ENCODE measurements at regions of chr16 and their contacts with region 1.

Region 1: GRCh38 chr16:49441366-49441780 is 67.8 kb downstream of the C16orf78 start:
- DNase-seq: peak; percentile 81
- ATAC-seq: peak; percentile 96
- H3K4me3 Mint-ChIP-seq: peak overlapping the region; percentile 20
- H3K27ac Mint-ChIP-seq: peak overlapping the region; percentile 72
- H3K4me1 Mint-ChIP-seq: peaks cover 20% of the 10 kb centered on the region
- H3K27me3 Mint-ChIP-seq: no peaks in the 10 kb centered on the region

Region 2: DNA sequence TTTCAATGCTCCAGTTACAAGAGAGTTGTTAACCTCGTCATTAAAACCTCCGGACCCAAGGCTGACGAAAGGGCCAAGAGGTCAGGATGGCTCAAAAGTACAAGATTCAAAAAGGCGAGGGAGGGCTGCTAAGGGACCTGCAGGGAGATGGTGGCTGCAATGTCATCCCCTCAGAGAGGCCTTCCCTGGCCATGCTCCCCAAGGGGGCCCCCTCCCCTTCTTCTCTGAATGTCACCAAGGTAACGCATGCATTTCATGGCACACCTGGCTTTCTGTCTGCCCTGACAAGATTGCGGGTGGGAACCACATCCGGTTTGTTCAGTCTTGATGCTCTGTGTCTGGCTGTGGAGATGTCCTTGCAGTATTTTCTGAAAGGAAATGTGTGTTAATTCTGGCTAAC is 22.2 kb after region 1 on chr16:
- CTCF ChIA-PET with region 1: interaction called, 3 read pairs
- POLR2A ChIA-PET with region 1: no interaction called
- intact Hi-C with region 1: loop called in 1 of 2 experiments (anchors 1 kb)
- DNase-seq: peak; percentile 86
- ATAC-seq: peak; percentile 84
- H3K4me3 Mint-ChIP-seq: peak overlapping the region; percentile 46
- H3K27ac Mint-ChIP-seq: peak overlapping the region; percentile 83
- H3K4me1 Mint-ChIP-seq: peaks cover 44% of the 10 kb centered on the region
- H3K27me3 Mint-ChIP-seq: no peaks in the 10 kb centered on the region

Region 3: DNA sequence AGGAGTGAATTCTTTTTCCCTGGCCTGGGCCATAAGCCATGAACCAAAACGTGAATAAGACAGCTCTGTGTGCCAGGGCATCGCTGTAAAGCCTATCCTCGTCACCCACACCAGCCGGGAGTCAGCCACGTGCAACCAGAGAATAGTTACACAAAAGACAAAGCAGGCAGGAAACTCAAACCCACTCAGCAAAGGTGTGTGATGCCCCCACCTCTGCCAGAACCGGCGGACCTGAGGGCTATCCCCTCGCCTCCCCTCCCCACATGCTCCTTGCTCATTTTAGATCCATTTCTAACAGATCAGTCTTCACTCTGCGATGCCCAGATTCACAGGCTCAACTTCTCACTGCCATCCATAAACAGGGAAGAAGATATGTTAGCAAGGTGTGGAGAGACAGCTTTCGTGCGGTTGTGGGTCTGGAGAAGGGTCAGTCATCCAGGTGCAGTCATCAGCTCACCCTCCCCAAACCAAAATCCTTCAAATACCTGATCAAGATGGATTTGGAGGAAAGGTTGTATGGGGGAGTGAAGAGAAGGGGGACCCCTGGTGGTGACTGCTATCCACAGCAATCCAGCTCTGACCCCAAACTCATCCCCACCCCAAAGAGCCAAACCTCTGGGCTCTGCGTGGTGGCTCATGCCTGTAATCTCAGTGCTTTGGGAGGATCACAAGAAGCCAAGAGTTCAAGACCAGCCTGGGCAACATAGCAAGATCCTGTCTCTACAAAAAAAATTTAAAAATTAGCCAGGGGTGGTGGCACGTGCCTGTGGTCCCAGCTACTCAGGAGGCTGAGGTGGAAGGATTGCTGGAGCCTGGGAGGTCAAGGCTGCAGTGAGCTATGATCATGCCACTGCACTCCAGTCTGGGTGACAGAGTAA is 151.4 kb after region 1 on chr16:
- CTCF ChIA-PET with region 1: interaction called, 4 read pairs
- POLR2A ChIA-PET with region 1: no interaction called
- intact Hi-C with region 1: loop called (anchors 1 to 5 kb)
- DNase-seq: peak; percentile 65
- ATAC-seq: peak; percentile 74
- H3K4me3 Mint-ChIP-seq: no peak overlapping the region
- H3K27ac Mint-ChIP-seq: no peak overlapping the region
- H3K4me1 Mint-ChIP-seq: peaks cover 11% of the 10 kb centered on the region
- H3K27me3 Mint-ChIP-seq: peaks cover 3% of the 10 kb centered on the region

Region 4: GRCh38 chr16:49716339-49716934 is 275.1 kb after region 1 on chr16:
- CTCF ChIA-PET with region 1: no interaction called
- POLR2A ChIA-PET with region 1: no interaction called
- intact Hi-C with region 1: no loop called
- DNase-seq: no peak
- ATAC-seq: no peak
- H3K4me3 Mint-ChIP-seq: no peak overlapping the region
- H3K27ac Mint-ChIP-seq: no peak overlapping the region
- H3K4me1 Mint-ChIP-seq: no peaks in the 10 kb centered on the region
- H3K27me3 Mint-ChIP-seq: peaks cover 2% of the 10 kb centered on the region

Region 5: DNA sequence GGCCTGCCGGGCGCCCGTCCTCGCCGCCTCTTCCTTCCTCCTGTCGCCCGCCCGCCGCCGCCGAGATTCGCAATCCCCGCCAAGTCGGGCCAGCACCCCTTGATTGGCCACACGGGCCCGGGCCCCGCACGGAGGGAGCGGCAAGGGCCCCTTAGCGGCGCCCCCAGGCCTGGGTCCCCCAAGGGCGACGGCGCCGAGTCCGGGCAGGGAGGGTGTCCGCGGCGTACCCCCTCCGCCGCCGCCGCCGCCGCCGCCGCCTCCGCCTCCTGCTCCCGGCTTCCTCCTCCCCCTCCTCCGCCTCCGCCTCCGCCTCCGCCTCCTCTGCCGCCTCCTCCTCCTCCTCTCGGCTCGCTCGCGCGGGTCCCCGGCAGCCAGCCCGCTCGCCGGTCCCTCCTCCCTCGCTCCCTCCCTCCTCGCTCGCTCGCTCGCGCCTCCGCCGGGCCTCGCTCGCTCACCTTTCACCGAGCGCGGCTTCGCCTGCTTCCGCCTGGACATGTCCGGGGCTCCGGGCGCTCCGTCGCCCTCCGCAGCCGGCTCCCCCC is 414.0 kb after region 1 on chr16:
- CTCF ChIA-PET with region 1: no interaction called
- POLR2A ChIA-PET with region 1: no interaction called
- intact Hi-C with region 1: loop called in 1 of 2 experiments (anchors 5 kb)
- DNase-seq: peak; percentile 65
- ATAC-seq: peak; percentile 43
- H3K4me3 Mint-ChIP-seq: peak overlapping the region; percentile 32
- H3K27ac Mint-ChIP-seq: no peak overlapping the region
- H3K4me1 Mint-ChIP-seq: peaks cover 5% of the 10 kb centered on the region
- H3K27me3 Mint-ChIP-seq: peaks cover 40% of the 10 kb centered on the region

Region 6: GRCh38 chr16:49921791-49922456 is 480.6 kb after region 1 on chr16:
- CTCF ChIA-PET with region 1: no interaction called
- POLR2A ChIA-PET with region 1: no interaction called
- intact Hi-C with region 1: loop called in 1 of 2 experiments (anchors 2 kb)
- DNase-seq: peak; percentile 72
- ATAC-seq: peak; percentile 74
- H3K4me3 Mint-ChIP-seq: no peak overlapping the region
- H3K27ac Mint-ChIP-seq: no peak overlapping the region
- H3K4me1 Mint-ChIP-seq: no peaks in the 10 kb centered on the region
- H3K27me3 Mint-ChIP-seq: peaks cover 3% of the 10 kb centered on the region